GM13977 (cell line): ENCODE measurements at regions of chr15 and their contacts with region 1.

Region 1: DNA sequence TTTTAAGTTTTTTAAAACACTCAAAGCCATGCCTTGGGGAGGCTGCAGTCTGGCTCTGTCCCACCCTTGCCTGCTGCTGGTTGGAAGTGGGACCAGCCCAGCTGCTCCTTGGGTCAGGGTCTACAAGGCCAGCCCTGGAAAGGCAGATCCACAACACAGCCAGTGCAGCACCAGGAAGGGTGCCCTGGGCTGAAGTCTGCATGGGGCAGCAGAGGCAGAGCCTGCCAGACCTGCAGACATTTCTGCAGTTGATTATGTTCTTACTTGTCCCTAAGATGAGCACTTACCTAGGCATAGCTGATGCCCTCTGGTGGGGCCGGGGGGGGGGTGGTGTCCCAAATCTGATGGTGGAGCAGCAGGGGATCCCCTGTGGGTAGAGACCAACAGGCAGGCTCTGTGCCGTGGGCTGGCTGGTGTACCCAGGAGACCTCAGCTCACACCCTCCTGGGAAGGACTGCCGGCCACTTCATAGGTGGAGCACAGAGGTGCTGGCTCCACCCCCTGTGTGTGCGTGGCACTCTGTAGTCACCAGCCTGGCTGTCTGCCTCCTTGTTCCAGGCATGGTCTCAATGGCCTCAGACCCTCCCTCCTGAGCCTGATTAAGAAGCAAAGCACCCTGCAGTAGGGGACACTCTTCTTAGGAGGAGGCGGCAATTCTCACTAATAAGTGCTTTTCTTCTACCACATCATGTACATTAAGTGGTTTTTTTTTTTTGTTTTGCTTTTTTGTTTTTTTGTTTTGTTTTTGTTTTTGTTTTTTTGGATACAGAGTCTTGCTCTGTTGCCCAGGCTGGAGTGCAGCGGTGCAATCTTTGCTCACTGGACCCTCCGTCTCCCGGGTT is 97.4 kb upstream of the KLF13 start:
- DNase-seq: peak; percentile 79
- CTCF ChIP-seq: no peak

Region 2: GRCh38 chr15:31326156-31326732 is 97.0 kb after region 1 on chr15:
- in situ Hi-C with region 1: loop called (anchors 10 kb)
- DNase-seq: peak; percentile 100
- CTCF ChIP-seq: peak; percentile 2

Region 3: DNA sequence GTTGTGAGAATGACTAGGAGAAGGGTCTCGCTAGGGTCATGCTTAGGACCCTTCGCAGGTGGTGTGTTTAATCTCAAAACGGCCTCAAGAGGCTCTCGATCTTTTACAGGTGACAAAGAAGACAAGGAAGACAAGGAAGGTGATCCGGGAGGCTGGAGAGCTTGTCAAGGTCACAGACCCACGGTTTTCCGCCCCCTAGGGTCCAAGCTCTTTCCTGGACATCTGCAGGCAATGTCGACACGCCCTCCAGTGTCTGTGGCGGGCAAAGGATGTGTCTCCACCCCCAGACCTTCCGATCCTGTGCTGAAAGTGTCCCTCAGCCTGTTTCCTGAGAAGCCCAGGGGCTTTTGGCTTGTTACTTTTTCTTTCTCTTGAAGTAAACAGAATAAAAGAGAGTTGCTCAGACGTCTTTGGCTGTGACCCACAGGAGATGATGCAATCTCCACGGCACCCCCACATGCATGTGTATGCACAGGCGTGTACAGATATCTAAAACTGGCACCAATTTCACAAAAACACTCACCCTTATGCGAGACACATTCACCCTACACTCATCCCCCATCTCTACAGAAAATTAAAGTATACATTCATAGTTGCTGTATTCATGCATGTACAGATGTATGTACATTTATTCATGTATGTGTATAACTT is 206.2 kb after region 1 on chr15:
- in situ Hi-C with region 1: loop called (anchors 10 kb)
- DNase-seq: peak; percentile 76
- CTCF ChIP-seq: peak; percentile 78

Region 4: GRCh38 chr15:31499953-31500765 is 271.0 kb after region 1 on chr15:
- in situ Hi-C with region 1: no loop called
- DNase-seq: no peak
- CTCF ChIP-seq: no peak

Region 5: DNA sequence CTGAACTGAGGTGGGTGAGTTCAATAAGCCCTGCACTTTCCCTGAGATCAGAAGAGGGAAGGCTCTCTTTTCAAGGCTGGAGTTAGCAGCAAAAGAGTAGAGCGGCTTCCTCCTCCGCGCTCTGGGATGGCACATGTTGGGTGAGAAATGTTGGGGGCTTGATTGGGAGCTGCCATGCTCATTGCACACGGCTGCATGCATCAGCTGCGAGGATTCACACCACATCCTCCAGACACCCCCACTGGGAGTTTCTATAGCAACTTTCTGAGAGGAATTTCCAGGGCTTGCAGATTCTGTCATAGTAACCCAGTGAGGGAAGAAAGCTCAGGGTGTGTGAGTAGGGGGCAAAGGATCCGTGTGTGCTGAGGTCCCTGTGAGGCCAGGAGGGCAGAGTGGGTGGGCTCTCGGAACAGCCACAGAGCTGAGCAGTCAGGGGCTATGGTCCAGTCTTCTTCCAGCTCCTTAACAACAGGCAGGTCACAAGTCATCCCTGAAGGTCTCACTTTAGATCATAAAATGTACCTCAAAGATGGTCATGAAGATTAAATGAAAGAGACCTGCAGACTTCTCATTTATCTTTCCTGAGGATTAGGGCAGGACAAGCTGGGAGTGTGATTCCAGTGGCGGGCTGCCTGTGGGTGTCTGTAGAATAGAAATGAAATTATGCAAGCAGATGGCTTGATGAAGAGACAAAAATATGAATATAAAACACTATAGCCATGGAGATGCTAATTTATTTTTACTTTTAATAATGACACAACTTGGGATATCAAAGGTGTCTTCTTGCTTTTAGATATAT is 725.4 kb after region 1 on chr15:
- in situ Hi-C with region 1: no loop called
- DNase-seq: no peak
- CTCF ChIP-seq: no peak